SK-N-SH (cell line): ENCODE measurements at regions of chr7 and their contacts with region 1.

Region 1: GRCh38 chr7:19665399-19666008 is 43.3 kb downstream of the POLR1F start:
- DNase-seq: peak; percentile 39
- H3K4me3 ChIP-seq: no peak overlapping the region
- H3K27ac ChIP-seq: no peak overlapping the region
- H3K4me1 ChIP-seq: peaks cover 0 to 3% of the 10 kb centered on the region in 2 experiments; a peak in 2 of 4 replicates
- H3K27me3 ChIP-seq: no peaks in the 10 kb centered on the region; the same call in 1 of the 2 replicates
- CTCF ChIP-seq: peak; percentile 93
- EP300 ChIP-seq: no peak
- RAD21 ChIP-seq: peak; percentile 82

Region 2: GRCh38 chr7:19030281-19030680 is 635.2 kb before region 1 on chr7:
- CTCF ChIA-PET with region 1: no interaction called
- POLR2A ChIA-PET with region 1: no interaction called
- DNase-seq: no peak
- H3K4me3 ChIP-seq: no peak overlapping the region
- H3K27ac ChIP-seq: peak overlapping the region; percentile 58 to 66
- H3K4me1 ChIP-seq: peaks cover 0 to 16% of the 10 kb centered on the region in 2 experiments; a peak in 2 of 4 replicates
- H3K27me3 ChIP-seq: no peaks in the 10 kb centered on the region
- CTCF ChIP-seq: no peak
- EP300 ChIP-seq: no peak
- RAD21 ChIP-seq: no peak

Region 3: GRCh38 chr7:19397911-19398310 is 267.6 kb before region 1 on chr7:
- CTCF ChIA-PET with region 1: no interaction called
- POLR2A ChIA-PET with region 1: no interaction called
- DNase-seq: no peak
- H3K4me3 ChIP-seq: no peak overlapping the region
- H3K27ac ChIP-seq: no peak overlapping the region
- H3K4me1 ChIP-seq: no peaks in the 10 kb centered on the region
- H3K27me3 ChIP-seq: peaks cover 13% of the 10 kb centered on the region; the same call in 1 of the 2 replicates
- CTCF ChIP-seq: no peak
- EP300 ChIP-seq: no peak
- RAD21 ChIP-seq: no peak

Region 4: DNA sequence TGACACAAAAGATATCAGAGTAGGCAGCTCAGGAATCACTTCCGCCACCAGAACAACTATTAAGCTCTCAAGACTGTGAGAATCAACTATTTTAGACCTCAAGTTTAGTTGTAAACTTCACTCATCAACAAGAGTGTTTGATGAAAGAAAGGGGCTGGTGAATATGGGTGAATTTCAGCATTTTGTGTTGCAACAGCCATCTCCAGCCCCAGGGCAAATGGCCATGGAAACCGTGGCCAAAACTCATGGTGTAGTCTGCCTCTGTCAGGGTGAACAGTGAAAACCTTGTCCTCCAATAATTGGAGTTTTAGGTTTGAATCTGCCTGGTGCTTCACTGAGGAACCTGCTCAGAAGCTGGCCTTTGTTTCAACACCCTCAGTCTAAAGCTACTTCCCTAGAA is 16.7 kb before region 1 on chr7:
- CTCF ChIA-PET with region 1: interaction called, 10 read pairs
- POLR2A ChIA-PET with region 1: no interaction called
- DNase-seq: no peak
- H3K4me3 ChIP-seq: no peak overlapping the region
- H3K27ac ChIP-seq: no peak overlapping the region
- H3K4me1 ChIP-seq: no peaks in the 10 kb centered on the region
- H3K27me3 ChIP-seq: no peaks in the 10 kb centered on the region
- CTCF ChIP-seq: no peak
- EP300 ChIP-seq: no peak
- RAD21 ChIP-seq: no peak

Region 5: GRCh38 chr7:19815546-19815945 is 150.0 kb after region 1 on chr7:
- CTCF ChIA-PET with region 1: no interaction called
- POLR2A ChIA-PET with region 1: no interaction called
- DNase-seq: no peak
- H3K4me3 ChIP-seq: no peak overlapping the region
- H3K27ac ChIP-seq: no peak overlapping the region
- H3K4me1 ChIP-seq: no peaks in the 10 kb centered on the region
- H3K27me3 ChIP-seq: no peaks in the 10 kb centered on the region
- CTCF ChIP-seq: no peak
- EP300 ChIP-seq: no peak
- RAD21 ChIP-seq: no peak